ENCODE measurements at regions of chr1 and their contacts with region 1.

Region 1: GRCh38 chr1:175319418-175320230 is 127.0 kb upstream of the KIAA0040 start:
- DNase-seq: peak; percentile 71 to 84
- H3K4me3 ChIP-seq: no peak overlapping the region
- H3K27ac ChIP-seq: no peak overlapping the region
- H3K4me1 ChIP-seq: peaks cover 0 to 11% (median 3%) of the 10 kb centered on the region in 4 donors
- H3K27me3 ChIP-seq: no peaks in the 10 kb centered on the region
- CTCF ChIP-seq: peak; percentile 84 to 87

Region 2: GRCh38 chr1:173876732-173877131 is 1442.9 kb before region 1 on chr1:
- intact Hi-C with region 1: no loop called
- DNase-seq: no peak
- H3K4me3 ChIP-seq: no peak overlapping the region
- H3K27ac ChIP-seq: no peak overlapping the region
- H3K4me1 ChIP-seq: no peaks in the 10 kb centered on the region
- H3K27me3 ChIP-seq: no peaks in the 10 kb centered on the region
- CTCF ChIP-seq: no peak

Region 3: GRCh38 chr1:175154629-175155472 is 164.8 kb before region 1 on chr1:
- intact Hi-C with region 1: loop called (anchors 1 kb)
- DNase-seq: peak; percentile 64 to 77
- H3K4me3 ChIP-seq: no peak overlapping the region
- H3K27ac ChIP-seq: no peak overlapping the region
- H3K4me1 ChIP-seq: no peaks in the 10 kb centered on the region
- H3K27me3 ChIP-seq: peaks cover 0 to 6% of the 10 kb centered on the region in 2 donors
- CTCF ChIP-seq: peak; percentile 86

Region 4: DNA sequence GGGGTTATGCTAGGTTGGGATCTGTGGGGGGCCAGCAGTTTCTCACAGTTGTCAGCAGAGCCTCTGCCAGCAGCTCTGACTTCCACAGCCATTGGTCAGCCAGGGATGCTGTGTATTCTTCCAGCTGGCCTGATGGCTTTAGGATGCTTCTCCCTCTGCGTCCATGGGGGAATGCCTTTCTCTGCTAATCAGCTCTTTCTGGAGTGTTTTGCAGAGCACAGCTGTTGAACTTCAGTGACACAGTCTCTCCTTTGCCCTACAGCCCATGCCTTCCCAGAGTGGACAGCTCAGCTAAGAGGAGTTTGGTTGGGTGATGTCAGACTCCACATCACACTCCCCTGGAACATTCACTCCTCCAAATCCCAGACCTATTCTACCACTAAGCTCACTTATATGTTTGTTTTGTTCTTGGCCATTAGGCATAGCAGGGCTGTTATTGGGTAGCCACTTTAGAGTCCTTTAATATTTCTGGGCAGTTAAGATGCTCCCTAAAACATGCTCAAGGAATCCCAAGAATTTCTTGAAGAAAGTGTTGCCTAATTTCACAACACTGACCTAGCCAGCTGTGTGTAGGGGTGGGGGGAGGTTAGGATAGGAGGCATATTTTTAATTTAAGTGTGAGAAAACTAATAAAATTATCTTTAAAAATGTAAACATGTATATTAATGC is 51.8 kb before region 1 on chr1:
- intact Hi-C with region 1: no loop called
- DNase-seq: peak in 1 of 2 donors; percentile 19
- H3K4me3 ChIP-seq: no peak overlapping the region
- H3K27ac ChIP-seq: no peak overlapping the region
- H3K4me1 ChIP-seq: no peaks in the 10 kb centered on the region
- H3K27me3 ChIP-seq: no peaks in the 10 kb centered on the region
- CTCF ChIP-seq: no peak

Region 5: DNA sequence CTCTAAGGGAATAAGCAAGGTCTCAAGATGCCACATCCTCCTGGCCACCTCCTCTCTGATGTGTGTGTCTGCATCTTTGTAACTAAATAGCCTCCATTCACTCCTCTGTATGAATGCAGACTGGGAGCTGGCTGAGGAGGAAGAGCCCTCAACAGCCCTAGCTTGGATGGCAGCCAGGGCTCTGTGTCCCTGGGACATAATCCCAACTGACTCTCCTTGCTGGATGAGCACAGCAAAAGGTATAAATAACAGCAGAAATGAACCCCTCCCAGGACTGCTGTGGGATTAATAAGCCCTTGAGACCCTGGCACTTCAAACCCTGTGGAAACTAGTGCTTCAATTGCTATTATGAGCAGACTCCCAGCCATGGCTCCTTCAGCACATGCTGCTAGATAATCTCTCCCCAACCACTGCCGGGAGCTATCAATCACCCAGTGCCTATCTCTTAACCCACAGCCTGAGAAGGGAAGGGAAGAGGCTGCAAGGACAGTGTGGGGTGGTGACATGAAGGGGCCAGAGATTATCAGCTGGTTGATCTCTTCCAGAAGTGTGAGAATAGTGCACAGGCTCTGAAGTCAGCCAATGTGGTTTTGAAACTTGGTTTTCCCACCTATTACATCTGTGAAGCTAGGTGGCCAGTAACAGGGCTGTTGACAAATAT is 271.6 kb after region 1 on chr1:
- intact Hi-C with region 1: no loop called
- DNase-seq: no peak
- H3K4me3 ChIP-seq: no peak overlapping the region
- H3K27ac ChIP-seq: no peak overlapping the region
- H3K4me1 ChIP-seq: no peaks in the 10 kb centered on the region
- H3K27me3 ChIP-seq: no peaks in the 10 kb centered on the region
- CTCF ChIP-seq: no peak